Endothelial cell of umbilical vein (primary cell): ENCODE measurements at regions of chr12 and their contacts with region 1.

Region 1: DNA sequence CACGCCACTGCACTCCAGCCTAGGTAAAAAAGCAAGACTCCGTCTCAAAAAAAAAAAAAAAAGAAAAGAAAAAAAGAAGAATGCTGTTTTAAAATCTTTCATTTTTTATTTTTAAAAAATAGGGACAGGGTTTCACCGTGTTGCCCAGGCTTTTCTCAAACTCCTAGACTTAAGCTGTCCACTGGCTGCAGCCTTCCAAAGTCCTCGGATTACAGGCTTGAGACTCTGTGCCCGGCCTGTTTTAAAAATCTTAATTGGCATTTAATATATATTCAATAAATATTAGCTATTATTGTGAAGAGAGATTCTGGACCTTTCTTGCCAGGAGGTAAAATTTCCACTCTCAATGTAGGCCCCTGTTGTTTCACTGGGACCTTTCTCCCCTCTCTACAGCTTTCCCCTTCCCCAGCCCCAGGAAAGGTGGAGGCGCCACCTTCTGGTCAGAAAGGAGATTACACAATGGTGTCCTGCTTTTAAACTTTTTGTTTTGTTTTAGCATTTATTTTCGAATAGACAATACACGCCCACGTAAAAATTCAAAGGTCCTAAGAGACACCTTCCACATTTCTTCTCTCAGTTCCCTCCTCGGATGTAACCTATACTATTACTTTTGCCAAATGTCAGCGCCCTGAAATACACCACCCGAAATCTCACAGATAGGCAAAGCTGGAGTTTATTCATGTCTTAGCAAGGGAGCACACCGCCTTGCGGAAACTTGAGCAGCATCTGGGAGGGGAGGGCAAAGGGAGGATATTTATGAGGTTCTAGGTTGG is 23.8 kb upstream of the PHC1 start:
- DNase-seq: peak; percentile 77
- H3K4me3 ChIP-seq: peak overlapping the region; percentile 42 to 93 (median 63)
- H3K27ac ChIP-seq: no peak overlapping the region
- H3K4me1 ChIP-seq: no peaks in the 10 kb centered on the region
- H3K27me3 ChIP-seq: peaks cover 2% of the 10 kb centered on the region in 2 experiments
- CTCF ChIP-seq: peak; percentile 76 to 83
- POLR2A ChIP-seq: no peak

Region 2: DNA sequence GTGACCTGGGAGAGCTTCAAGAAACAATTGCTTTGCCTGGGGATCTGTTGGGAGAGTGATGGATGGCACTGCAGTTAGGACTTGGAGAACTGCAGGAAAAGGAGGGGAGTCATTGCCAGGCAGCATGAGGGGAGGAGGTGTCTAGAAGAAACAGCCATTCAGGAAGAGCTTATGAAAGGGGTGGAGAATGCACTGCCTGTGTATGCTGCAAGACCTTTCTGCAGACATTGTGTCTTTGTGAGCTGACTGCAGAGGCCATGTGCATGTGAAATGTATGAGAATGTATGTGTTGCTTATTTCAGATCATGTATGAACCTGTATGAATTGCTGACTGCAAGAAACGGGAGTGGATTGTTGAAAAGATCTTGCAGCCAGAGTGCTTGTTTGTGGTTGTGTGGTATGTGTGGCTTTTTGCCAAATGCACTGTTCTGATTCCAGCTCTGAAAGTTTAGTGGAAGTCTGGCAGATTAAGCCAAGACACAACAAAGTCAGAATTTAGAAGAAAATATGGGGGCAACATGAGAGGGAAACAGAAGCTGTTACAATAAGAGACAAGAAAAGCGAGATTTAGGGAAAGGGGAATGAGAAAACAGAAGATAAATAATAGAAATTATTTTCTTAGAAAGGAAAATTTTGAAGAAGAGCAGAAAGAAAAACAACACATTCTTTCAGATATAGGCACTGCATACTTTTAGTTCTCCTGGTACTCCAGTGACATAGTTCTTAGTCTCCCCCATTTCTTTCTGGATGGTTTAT is 202.5 kb before region 1 on chr12:
- CTCF ChIA-PET with region 1: interaction called, 27 read pairs
- POLR2A ChIA-PET with region 1: no interaction called
- dilution Hi-C with region 1: no loop called
- intact Hi-C with region 1: no loop called
- DNase-seq: peak; percentile 97
- H3K4me3 ChIP-seq: no peak overlapping the region
- H3K27ac ChIP-seq: peak overlapping the region; percentile 34
- H3K4me1 ChIP-seq: peaks cover 32% of the 10 kb centered on the region
- H3K27me3 ChIP-seq: no peaks in the 10 kb centered on the region
- CTCF ChIP-seq: no peak
- POLR2A ChIP-seq: peak; percentile 77

Region 3: DNA sequence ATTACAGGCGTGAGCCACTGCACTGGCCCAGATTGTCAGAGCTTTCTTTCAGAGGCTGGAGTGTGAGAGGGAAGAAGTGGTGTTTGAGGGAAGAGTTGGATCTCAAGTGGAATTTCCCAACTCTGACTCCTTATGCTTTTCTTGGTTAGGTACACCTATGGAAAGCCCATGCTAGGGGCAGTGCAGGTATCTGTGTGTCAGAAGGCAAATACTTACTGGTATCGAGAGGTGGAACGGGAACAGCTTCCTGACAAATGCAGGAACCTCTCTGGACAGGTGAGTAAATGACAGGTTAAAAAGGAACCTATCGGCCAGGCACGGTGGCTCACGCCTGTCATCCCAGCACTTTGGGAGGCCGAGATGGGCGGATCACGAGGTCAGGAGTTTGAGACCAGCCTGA is 53.2 kb before region 1 on chr12:
- CTCF ChIA-PET with region 1: interaction called, 10 read pairs
- POLR2A ChIA-PET with region 1: no interaction called
- dilution Hi-C with region 1: no loop called
- intact Hi-C with region 1: no loop called
- DNase-seq: no peak
- H3K4me3 ChIP-seq: no peak overlapping the region
- H3K27ac ChIP-seq: no peak overlapping the region
- H3K4me1 ChIP-seq: no peaks in the 10 kb centered on the region
- H3K27me3 ChIP-seq: no peaks in the 10 kb centered on the region
- CTCF ChIP-seq: no peak
- POLR2A ChIP-seq: no peak

Region 4: GRCh38 chr12:8870586-8870985 is 19.9 kb before region 1 on chr12:
- CTCF ChIA-PET with region 1: interaction called, 27 read pairs
- POLR2A ChIA-PET with region 1: no interaction called
- dilution Hi-C with region 1: no loop called
- intact Hi-C with region 1: no loop called
- DNase-seq: no peak
- H3K4me3 ChIP-seq: no peak overlapping the region
- H3K27ac ChIP-seq: no peak overlapping the region
- H3K4me1 ChIP-seq: no peaks in the 10 kb centered on the region
- H3K27me3 ChIP-seq: no peaks in the 10 kb centered on the region
- CTCF ChIP-seq: no peak
- POLR2A ChIP-seq: no peak

Region 5: DNA sequence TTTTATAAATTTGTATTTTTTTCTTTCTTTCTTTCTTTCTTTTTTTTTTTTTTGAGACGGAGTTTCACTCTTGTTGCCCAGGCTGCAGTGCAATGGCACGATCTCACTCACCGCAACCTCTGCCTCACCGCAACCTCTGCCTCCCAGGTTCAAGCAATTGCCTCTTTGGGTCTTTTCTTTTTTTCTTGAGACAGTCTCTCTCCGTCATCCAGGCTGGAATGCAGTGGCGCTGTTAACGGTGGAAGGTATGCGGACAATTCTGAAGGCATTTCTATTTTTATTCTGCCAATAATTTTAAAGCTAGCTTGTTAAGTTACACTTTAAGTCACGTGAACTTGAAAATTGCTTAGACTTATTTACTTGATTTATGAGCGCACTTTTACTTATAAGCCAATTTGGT is 15.0 kb after region 1 on chr12:
- CTCF ChIA-PET with region 1: interaction called, 15 read pairs
- POLR2A ChIA-PET with region 1: no interaction called
- dilution Hi-C with region 1: no loop called
- intact Hi-C with region 1: no loop called
- DNase-seq: no peak
- H3K4me3 ChIP-seq: no peak overlapping the region
- H3K27ac ChIP-seq: no peak overlapping the region
- H3K4me1 ChIP-seq: no peaks in the 10 kb centered on the region
- H3K27me3 ChIP-seq: no peaks in the 10 kb centered on the region
- CTCF ChIP-seq: no peak
- POLR2A ChIP-seq: no peak

Region 6: DNA sequence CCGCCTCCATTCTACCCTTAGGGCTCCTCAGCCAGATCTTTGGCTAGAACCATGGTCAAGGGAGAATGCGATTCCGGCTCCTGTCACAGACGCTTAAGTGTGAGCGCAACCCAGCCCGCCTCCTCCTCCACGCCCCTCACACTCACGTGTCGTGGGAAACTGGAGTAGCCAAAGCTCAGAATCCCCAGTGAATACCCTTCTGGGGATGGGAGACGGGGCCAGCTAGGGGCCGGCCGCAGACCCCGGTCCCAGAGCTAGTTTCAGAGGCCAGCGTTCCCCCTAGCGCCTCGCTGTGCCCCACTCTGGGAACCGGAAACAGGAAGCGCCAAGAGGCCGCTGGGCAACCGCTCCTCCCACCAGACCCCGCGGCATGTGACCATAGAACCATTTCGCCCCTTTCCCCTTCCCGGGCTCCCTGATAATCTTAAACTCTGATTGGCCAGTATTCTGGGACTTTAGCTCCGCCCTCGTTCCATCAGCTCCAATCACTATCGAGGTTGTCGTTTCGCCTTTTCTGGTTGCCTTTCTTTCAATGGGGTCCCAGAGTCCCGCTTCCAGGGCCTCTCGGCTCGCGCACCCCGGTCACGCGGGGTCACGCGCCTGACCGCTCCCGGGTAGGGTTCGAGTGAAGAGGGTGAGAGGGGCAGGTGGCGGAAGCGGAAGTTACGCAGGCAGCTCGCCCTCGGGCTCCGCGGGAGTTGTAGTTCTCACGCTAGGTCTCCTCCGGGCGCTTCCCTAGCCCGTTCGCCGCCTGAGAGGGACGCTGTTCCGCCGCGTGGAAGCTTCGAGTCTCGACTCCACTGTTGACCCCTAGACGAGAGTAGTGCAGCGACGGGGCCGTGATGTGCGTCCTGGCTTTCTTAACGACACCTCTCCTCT is 59.1 kb after region 1 on chr12 and contains the start of gene M6PR:
- CTCF ChIA-PET with region 1: interaction called, 20 read pairs
- POLR2A ChIA-PET with region 1: no interaction called
- dilution Hi-C with region 1: no loop called
- intact Hi-C with region 1: no loop called
- DNase-seq: peak; percentile 95
- H3K4me3 ChIP-seq: peak within 1 kb of the TSS; percentile 58 to 96 (median 95)
- H3K27ac ChIP-seq: peak within 1 kb of the TSS; percentile 98
- H3K4me1 ChIP-seq: peaks cover 21% of the 10 kb centered on the region
- H3K27me3 ChIP-seq: no peaks in the 10 kb centered on the region
- CTCF ChIP-seq: peak; percentile 46 to 74
- POLR2A ChIP-seq: peak; percentile 75
- total RNA-seq, gene M6PR: 113 and 142 TPM in 2 replicates

Region 7: GRCh38 chr12:9049520-9050133 is 159.1 kb after region 1 on chr12:
- CTCF ChIA-PET with region 1: interaction called, 25 read pairs
- POLR2A ChIA-PET with region 1: no interaction called
- dilution Hi-C with region 1: no loop called
- intact Hi-C with region 1: loop called (anchors 2 kb)
- DNase-seq: peak; percentile 62
- H3K4me3 ChIP-seq: no peak overlapping the region
- H3K27ac ChIP-seq: no peak overlapping the region
- H3K4me1 ChIP-seq: no peaks in the 10 kb centered on the region
- H3K27me3 ChIP-seq: peaks cover 5 to 13% of the 10 kb centered on the region in 2 experiments
- CTCF ChIP-seq: peak; percentile 13 to 27
- POLR2A ChIP-seq: no peak